CD14-positive monocyte (primary cell): ENCODE measurements at regions of chr12 and their contacts with region 1.

Region 1: DNA sequence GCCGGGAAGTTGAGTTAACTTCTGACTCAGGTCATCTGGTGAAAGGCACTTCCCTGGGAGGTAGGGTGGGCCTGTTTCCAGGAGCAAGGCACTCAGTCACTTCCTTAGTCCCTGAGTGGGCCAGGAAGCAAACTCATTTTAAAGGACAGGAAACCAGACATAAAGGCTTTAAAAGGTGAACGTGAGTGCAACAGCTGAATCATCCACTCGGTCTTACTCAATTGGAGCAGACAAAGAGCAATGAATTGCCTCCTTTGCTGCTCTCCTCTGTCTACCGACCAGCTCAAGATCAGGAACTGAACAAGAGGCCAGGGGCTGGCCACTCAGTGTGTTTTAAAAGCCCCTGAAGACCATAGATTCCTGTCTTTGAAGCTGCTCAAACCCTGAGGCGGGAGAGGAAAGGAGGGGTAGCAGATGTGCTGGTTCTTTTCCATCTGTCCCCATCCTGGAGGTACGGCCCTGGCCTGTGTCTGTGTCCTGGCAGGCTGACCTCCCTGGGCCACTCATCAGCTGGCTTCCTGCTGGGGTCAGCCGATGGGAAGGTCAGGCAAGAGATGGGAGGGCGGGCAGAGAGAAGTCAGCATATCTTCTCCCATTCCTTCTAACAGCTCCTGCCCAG is 148.9 kb downstream of the PPM1H start:
- DNase-seq: peak; percentile 71 to 93 (median 89)
- H3K4me3 ChIP-seq: peak overlapping the region in 1 of 3 experiments; percentile 31
- H3K4me3 Mint-ChIP-seq: peak overlapping the region; percentile 21 to 48
- H3K27ac ChIP-seq: peak overlapping the region; percentile 62 to 81
- H3K27ac Mint-ChIP-seq: peak overlapping the region; percentile 83 to 95 (median 89)
- H3K4me1 ChIP-seq: peaks cover 42 to 43% of the 10 kb centered on the region in 2 donors
- H3K4me1 Mint-ChIP-seq: peaks cover 57% of the 10 kb centered on the region
- H3K27me3 ChIP-seq: no peaks in the 10 kb centered on the region
- H3K27me3 Mint-ChIP-seq: peaks cover 0 to 4% (median 0%) of the 10 kb centered on the region in 3 donors
- CTCF ChIP-seq: no peak

Region 2: DNA sequence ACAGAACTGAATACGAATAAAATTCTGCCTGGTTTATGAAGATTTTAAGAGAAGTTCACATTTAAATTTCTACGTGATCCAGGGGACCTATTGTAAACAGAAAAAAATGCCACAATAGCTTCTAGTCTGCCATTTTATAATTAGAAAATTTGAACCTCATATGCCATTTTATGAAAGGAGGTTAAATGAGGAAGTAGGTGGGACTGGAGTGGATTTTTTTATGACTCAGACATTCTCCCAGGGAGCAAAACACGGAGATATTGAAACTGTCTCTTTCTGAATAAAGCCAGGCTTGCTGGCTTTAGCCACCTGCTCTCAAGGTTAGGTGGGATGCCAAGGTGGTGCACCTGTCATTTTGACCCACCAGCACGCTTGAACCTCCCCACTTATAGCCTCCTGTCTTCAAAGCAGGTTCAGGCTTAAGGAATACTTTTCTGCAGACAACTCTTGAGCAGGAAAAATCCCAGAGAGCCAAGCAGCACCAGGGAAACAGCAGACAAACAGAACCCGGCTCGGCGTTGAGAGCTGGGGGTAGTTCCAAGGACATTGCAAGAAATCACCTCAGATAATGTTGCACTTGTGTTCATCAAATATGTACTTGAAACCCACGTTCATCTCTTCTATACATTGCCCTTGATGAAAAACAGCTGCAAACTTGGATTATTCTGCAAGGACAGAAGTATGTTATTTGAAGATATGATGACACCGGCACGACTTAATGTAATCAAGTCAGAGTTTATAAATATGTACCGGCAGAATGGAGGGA is 54.8 kb before region 1 on chr12:
- intact Hi-C with region 1: loop called (anchors 5 to 10 kb)
- DNase-seq: peak; percentile 60 to 84 (median 80)
- H3K4me3 ChIP-seq: no peak overlapping the region
- H3K4me3 Mint-ChIP-seq: peak overlapping the region; percentile 43 to 59
- H3K27ac ChIP-seq: peak overlapping the region; percentile 10 to 71
- H3K27ac Mint-ChIP-seq: peak overlapping the region; percentile 78 to 96 (median 92)
- H3K4me1 ChIP-seq: peaks cover 44 to 61% of the 10 kb centered on the region in 2 donors
- H3K4me1 Mint-ChIP-seq: peaks cover 61% of the 10 kb centered on the region
- H3K27me3 ChIP-seq: no peaks in the 10 kb centered on the region
- H3K27me3 Mint-ChIP-seq: peaks cover 0 to 2% (median 0%) of the 10 kb centered on the region in 3 donors
- CTCF ChIP-seq: no peak

Region 3: DNA sequence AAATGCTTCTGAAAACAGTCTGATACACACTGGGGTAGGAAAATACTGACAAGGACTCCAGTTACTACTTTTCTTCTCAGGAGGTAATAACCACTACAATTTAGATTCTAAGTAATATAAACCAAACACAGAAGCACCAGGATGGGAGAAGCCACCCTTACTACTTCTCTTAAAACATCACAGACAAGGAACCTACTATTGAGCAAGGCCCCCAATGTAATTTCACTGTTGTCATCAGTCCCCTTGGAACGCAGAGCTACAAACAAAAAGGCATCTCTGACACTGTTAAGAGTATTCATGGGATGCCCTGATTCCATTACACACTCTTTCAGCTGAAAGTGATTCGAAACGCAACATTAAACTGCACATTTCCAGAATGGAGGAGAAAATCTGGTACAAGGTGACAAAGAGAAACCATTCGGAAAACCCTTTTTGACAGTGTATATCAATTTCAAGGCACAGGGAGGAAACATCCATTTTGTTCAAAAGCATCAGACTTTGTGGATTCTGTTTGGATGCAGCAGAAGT is 37.0 kb before region 1 on chr12:
- intact Hi-C with region 1: loop called in 1 of 2 experiments (anchors 5 kb)
- DNase-seq: peak; percentile 18 to 55 (median 23)
- H3K4me3 ChIP-seq: no peak overlapping the region
- H3K4me3 Mint-ChIP-seq: no peak overlapping the region
- H3K27ac ChIP-seq: peak overlapping the region in 1 of 2 donors; percentile 1
- H3K27ac Mint-ChIP-seq: peak overlapping the region in 4 of 7 donors; percentile 42 to 80 (median 61)
- H3K4me1 ChIP-seq: peaks cover 33 to 37% of the 10 kb centered on the region in 2 donors
- H3K4me1 Mint-ChIP-seq: peaks cover 36% of the 10 kb centered on the region
- H3K27me3 ChIP-seq: no peaks in the 10 kb centered on the region
- H3K27me3 Mint-ChIP-seq: no peaks in the 10 kb centered on the region
- CTCF ChIP-seq: no peak